Gastrocnemius medialis (tissue), 4 donors: ENCODE measurements at regions of chr15 and their contacts with region 1.

Region 1: GRCh38 chr15:74036271-74037170 is 42.0 kb downstream of the PML start:
- DNase-seq: no peak
- ATAC-seq: peak in 1 of 2 donors; percentile 19
- H3K4me3 ChIP-seq: no peak overlapping the region
- H3K27ac ChIP-seq: no peak overlapping the region
- H3K4me1 ChIP-seq: peaks cover 5 to 10% of the 10 kb centered on the region in 2 donors
- H3K27me3 ChIP-seq: no peaks in the 10 kb centered on the region
- CTCF ChIP-seq: peak in 2 of 5 experiments; percentile 25 to 29
- POLR2A ChIP-seq: no peak

Region 2: DNA sequence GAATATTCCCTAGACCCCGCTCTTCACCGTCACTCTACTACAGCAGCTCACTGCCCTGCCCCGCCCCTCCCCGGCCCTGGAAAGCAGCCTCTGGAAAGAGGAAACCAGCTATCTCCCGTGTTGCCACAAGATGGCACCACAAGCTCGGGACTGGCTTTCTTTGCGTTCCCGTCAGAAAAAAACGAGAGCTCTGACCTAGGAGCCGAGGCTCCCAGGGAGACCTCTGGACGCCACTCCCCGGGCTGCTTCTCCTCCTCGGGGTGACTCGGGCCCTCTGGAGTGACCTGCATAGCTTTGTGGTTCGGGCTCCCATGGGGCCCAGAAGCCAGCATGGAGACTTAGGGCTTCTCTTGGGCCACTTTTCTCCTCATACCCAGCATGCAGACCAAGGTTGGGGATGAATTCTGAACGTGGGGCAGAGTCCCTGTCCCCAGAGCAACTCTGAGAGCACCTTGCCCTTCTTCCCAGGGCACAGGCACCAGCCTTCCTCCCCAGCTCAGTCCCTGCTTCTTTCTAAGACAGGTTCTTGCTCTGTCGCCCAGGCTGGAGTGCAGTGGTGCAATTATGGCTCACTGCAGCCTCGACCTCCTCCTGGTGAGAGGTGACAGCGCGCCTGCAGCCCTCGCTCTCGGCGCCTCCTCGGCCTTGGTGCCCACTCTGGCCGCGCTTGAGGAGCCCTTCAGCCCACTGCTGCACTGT is 63.4 kb before region 1 on chr15:
- in situ Hi-C with region 1: no loop called
- intact Hi-C with region 1: loop called (anchors 1 kb)
- DNase-seq: peak; percentile 64 to 76
- ATAC-seq: peak; percentile 95 to 99
- H3K4me3 ChIP-seq: peak overlapping the region; percentile 19 to 35 (median 28)
- H3K27ac ChIP-seq: no peak overlapping the region
- H3K4me1 ChIP-seq: peaks cover 0 to 3% of the 10 kb centered on the region in 2 donors
- H3K27me3 ChIP-seq: peaks cover 0 to 3% (median 0%) of the 10 kb centered on the region in 3 donors
- CTCF ChIP-seq: peak; percentile 75 to 90 (median 87)
- POLR2A ChIP-seq: no peak

Region 3: GRCh38 chr15:73982222-73982962 is 54.1 kb before region 1 on chr15:
- in situ Hi-C with region 1: loop called in 1 of 4 experiments (anchors 10 kb)
- intact Hi-C with region 1: no loop called
- DNase-seq: peak; percentile 48 to 71
- ATAC-seq: peak; percentile 75 to 81
- H3K4me3 ChIP-seq: peak overlapping the region in 2 of 4 donors; percentile 21 to 29
- H3K27ac ChIP-seq: peak overlapping the region; percentile 88 to 94 (median 90)
- H3K4me1 ChIP-seq: peaks cover 56 to 60% of the 10 kb centered on the region in 2 donors
- H3K27me3 ChIP-seq: no peaks in the 10 kb centered on the region
- CTCF ChIP-seq: no peak
- POLR2A ChIP-seq: peak in 1 of 2 donors; percentile 29